ENCODE measurements at regions of chr6 and their contacts with region 1.

Region 1: DNA sequence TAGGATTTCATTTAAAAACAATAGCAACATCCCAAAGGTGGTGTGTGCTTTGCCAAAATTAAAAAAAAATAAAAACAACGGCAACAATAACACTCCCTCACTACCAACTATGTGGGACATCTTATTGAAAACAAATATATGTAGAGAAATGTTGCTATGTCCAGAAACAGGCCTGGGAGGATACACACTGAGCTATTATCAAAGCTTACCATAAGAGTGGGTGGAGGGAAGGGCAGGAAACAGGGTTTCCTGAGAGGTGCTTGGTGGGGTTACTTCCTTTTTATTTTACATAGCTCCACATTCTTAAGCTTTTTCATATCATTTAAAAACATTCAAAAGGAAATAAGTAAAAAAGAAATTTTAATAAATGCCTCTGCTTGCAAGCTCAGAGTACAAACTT is 150.0 kb upstream of the RIPOR2 start:
- DNase-seq: peak in 2 of 5 donors; percentile 27 to 32
- ATAC-seq: peak; percentile 44 to 90 (median 84)
- H3K4me3 ChIP-seq: no peak overlapping the region
- H3K27ac ChIP-seq: peak overlapping the region; percentile 10 to 79 (median 64)
- H3K4me1 ChIP-seq: peaks cover 0 to 57% (median 16%) of the 10 kb centered on the region in 12 donors
- H3K27me3 ChIP-seq: no peaks in the 10 kb centered on the region
- CTCF ChIP-seq: no peak
- POLR2A ChIP-seq: no peak

Region 2: GRCh38 chr6:24919004-24919892 is 166.5 kb before region 1 on chr6:
- intact Hi-C with region 1: no loop called
- DNase-seq: peak in 4 of 5 donors; percentile 27 to 32 (median 29)
- ATAC-seq: peak; percentile 68 to 90 (median 86)
- H3K4me3 ChIP-seq: peak overlapping the region in 2 of 12 donors; percentile 15 to 18
- H3K27ac ChIP-seq: peak overlapping the region in 8 of 12 donors; percentile 20 to 80 (median 52)
- H3K4me1 ChIP-seq: peaks cover 0 to 52% (median 17%) of the 10 kb centered on the region in 12 donors
- H3K27me3 ChIP-seq: no peaks in the 10 kb centered on the region
- CTCF ChIP-seq: no peak
- POLR2A ChIP-seq: no peak

Region 3: DNA sequence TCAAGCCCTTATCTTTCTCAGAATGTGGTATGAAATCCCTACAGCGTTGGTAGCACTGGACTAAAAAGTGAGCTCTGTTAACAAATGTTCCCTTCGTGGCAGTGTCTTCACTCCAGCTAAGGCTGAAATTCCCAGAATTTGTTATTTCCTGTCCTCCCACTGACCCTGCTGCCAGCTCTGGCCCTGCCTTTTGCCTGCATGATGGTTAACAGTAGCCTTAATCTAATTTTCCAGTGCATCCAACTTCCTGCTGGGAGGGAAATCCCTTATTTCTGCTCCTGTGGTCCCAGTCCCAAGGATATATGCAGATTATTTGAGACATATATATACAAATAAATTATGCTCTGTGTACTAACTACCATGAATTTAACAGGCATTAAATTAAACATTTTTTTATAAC is 36.2 kb after region 1 on chr6:
- intact Hi-C with region 1: loop called in 1 of 10 experiments (anchors 5 kb)
- DNase-seq: peak in 4 of 5 donors; percentile 24 to 45 (median 32)
- ATAC-seq: peak in 3 of 4 donors; percentile 64 to 85 (median 78)
- H3K4me3 ChIP-seq: no peak overlapping the region
- H3K27ac ChIP-seq: peak overlapping the region in 11 of 12 donors; percentile 40 to 78 (median 58)
- H3K4me1 ChIP-seq: peaks cover 0 to 72% (median 17%) of the 10 kb centered on the region in 12 donors
- H3K27me3 ChIP-seq: no peaks in the 10 kb centered on the region
- CTCF ChIP-seq: no peak
- POLR2A ChIP-seq: no peak

Region 4: GRCh38 chr6:25138237-25139125 is 52.7 kb after region 1 on chr6:
- intact Hi-C with region 1: loop called in 3 of 10 experiments (anchors 5 to 10 kb)
- DNase-seq: peak in 4 of 5 donors; percentile 63 to 77 (median 71)
- ATAC-seq: peak; percentile 74 to 95 (median 92)
- H3K4me3 ChIP-seq: peak overlapping the region; percentile 16 to 64 (median 52)
- H3K27ac ChIP-seq: peak overlapping the region; percentile 78 to 96 (median 88)
- H3K4me1 ChIP-seq: peaks cover 0 to 29% (median 12%) of the 10 kb centered on the region in 12 donors
- H3K27me3 ChIP-seq: no peaks in the 10 kb centered on the region
- CTCF ChIP-seq: peak in 4 of 12 donors; percentile 8 to 40 (median 26)
- POLR2A ChIP-seq: peak in 1 of 2 donors; percentile 67

Region 5: GRCh38 chr6:25173951-25174474 is 88.3 kb after region 1 on chr6:
- intact Hi-C with region 1: loop called in 1 of 10 experiments (anchors 10 kb)
- DNase-seq: no peak
- ATAC-seq: peak in 1 of 4 donors; percentile 38
- H3K4me3 ChIP-seq: no peak overlapping the region
- H3K27ac ChIP-seq: peak overlapping the region in 2 of 12 donors; percentile 42 to 57
- H3K4me1 ChIP-seq: peaks cover 0 to 66% (median 5%) of the 10 kb centered on the region in 12 donors
- H3K27me3 ChIP-seq: no peaks in the 10 kb centered on the region
- CTCF ChIP-seq: no peak
- POLR2A ChIP-seq: no peak

Region 6: GRCh38 chr6:25179051-25179778 is 93.5 kb after region 1 on chr6:
- intact Hi-C with region 1: loop called in 2 of 10 experiments (anchors 5 to 10 kb)
- DNase-seq: no peak
- ATAC-seq: peak; percentile 62 to 74 (median 68)
- H3K4me3 ChIP-seq: no peak overlapping the region
- H3K27ac ChIP-seq: peak overlapping the region; percentile 57 to 82 (median 69)
- H3K4me1 ChIP-seq: peaks cover 0 to 58% (median 8%) of the 10 kb centered on the region in 12 donors
- H3K27me3 ChIP-seq: no peaks in the 10 kb centered on the region
- CTCF ChIP-seq: no peak
- POLR2A ChIP-seq: no peak

Measured in heart left ventricle (tissue), 16 donors.